Activated CD4-positive, alpha-beta T cell treated with anti-CD3 and anti-CD28 coated beads, Interleukin-2, amount 10 ng/mL, durations not matched to agents 7 days and 5 days (primary cell): ENCODE measurements at regions of chr7 and their contacts with region 1.

Region 1: DNA sequence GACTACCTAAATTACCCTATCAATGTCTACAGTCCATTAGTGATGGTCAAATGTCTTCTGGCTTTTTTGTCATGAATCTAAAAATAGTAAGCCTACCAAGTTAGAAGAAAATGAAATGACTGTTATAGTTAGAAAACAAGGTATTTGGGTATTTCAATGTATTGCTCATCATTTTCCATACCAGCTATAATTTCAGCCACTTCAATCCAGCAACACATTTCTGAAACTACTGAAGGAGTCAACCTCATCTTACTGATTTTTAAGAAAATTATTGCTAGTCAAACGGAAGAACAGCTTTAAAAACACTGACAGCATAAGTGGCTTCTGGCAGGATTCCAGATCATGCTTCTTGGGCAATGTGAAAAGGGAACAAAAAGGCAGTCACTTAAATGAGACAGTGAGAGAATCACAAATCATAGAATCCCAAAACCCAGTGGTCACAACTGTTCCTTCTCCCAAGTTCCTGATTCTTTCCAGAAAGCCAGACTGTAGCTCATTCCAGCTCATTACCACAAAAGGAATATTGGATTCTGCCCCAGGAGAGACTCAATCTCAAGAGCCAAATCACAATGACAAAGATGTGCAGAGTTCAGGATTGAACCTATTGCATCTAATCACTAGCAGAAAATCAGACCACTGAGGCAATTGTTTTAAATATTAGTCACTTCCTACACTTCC is 61.2 kb upstream of the LRRN3 start:
- DNase-seq: peak; percentile 49
- H3K4me3 Mint-ChIP-seq: peak overlapping the region; percentile 7
- H3K27ac Mint-ChIP-seq: peak overlapping the region; percentile 74
- H3K4me1 Mint-ChIP-seq: peaks cover 60% of the 10 kb centered on the region
- H3K27me3 Mint-ChIP-seq: no peaks in the 10 kb centered on the region

Region 2: DNA sequence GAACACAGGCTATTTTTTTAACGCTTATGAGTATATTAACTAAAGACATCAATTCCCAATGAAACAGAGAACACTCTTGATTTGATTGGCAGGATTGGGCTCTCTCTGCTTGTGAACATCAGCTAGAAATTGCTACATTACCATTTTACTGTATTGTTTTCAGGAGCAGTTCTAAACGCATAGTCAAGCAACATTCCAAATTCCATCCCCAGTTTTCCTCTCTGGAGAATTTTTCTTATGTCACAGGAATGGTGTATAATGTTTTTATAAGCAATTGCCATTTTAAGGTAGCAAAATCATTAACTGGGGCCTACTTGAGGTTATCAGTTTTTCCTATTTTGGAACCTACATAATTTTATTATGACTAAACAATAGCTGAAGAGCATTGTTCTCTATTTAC is 215.7 kb before region 1 on chr7:
- CTCF ChIA-PET with region 1: no interaction called
- POLR2A ChIA-PET with region 1: no interaction called
- DNase-seq: no peak
- H3K4me3 Mint-ChIP-seq: no peak overlapping the region
- H3K27ac Mint-ChIP-seq: no peak overlapping the region
- H3K4me1 Mint-ChIP-seq: no peaks in the 10 kb centered on the region
- H3K27me3 Mint-ChIP-seq: no peaks in the 10 kb centered on the region

Region 3: GRCh38 chr7:110909117-110909516 is 120.6 kb before region 1 on chr7:
- CTCF ChIA-PET with region 1: no interaction called
- POLR2A ChIA-PET with region 1: no interaction called
- DNase-seq: no peak
- H3K4me3 Mint-ChIP-seq: no peak overlapping the region
- H3K27ac Mint-ChIP-seq: no peak overlapping the region
- H3K4me1 Mint-ChIP-seq: peaks cover 36% of the 10 kb centered on the region
- H3K27me3 Mint-ChIP-seq: no peaks in the 10 kb centered on the region

Region 4: GRCh38 chr7:111012799-111013675 is 16.7 kb before region 1 on chr7:
- CTCF ChIA-PET with region 1: interaction called, 11 read pairs
- POLR2A ChIA-PET with region 1: no interaction called
- DNase-seq: peak; percentile 79
- H3K4me3 Mint-ChIP-seq: peak overlapping the region; percentile 65
- H3K27ac Mint-ChIP-seq: peak overlapping the region; percentile 89
- H3K4me1 Mint-ChIP-seq: peaks cover 70% of the 10 kb centered on the region
- H3K27me3 Mint-ChIP-seq: no peaks in the 10 kb centered on the region

Region 5: DNA sequence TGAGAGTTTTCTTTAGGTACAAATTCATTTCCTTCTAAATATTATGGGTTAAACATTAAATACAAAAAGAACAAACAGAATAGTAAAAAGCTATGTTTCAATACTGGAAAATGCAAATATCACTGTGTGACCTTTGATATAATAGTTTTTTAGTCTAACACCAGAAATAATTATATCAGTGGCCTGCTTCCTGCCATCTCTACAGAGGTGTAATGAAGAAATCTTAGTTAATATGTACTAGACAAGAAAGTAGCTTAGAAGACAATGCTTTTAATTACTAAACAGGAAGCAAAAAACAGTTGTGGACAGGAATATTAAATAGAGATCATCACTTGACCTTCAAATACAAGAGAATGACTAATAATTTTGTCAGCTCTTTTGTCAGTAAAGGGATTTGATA is 13.8 kb after region 1 on chr7:
- CTCF ChIA-PET with region 1: interaction called, 11 read pairs
- POLR2A ChIA-PET with region 1: no interaction called
- DNase-seq: no peak
- H3K4me3 Mint-ChIP-seq: no peak overlapping the region
- H3K27ac Mint-ChIP-seq: no peak overlapping the region
- H3K4me1 Mint-ChIP-seq: peaks cover 15% of the 10 kb centered on the region
- H3K27me3 Mint-ChIP-seq: no peaks in the 10 kb centered on the region

Region 6: GRCh38 chr7:111138196-111138569 is 108.5 kb after region 1 on chr7:
- CTCF ChIA-PET with region 1: no interaction called
- POLR2A ChIA-PET with region 1: no interaction called
- DNase-seq: peak; percentile 71
- H3K4me3 Mint-ChIP-seq: no peak overlapping the region
- H3K27ac Mint-ChIP-seq: peak overlapping the region; percentile 75
- H3K4me1 Mint-ChIP-seq: peaks cover 20% of the 10 kb centered on the region
- H3K27me3 Mint-ChIP-seq: no peaks in the 10 kb centered on the region